K562 (cell line): ENCODE measurements at regions of chr5 and their contacts with region 1.

Region 1: DNA sequence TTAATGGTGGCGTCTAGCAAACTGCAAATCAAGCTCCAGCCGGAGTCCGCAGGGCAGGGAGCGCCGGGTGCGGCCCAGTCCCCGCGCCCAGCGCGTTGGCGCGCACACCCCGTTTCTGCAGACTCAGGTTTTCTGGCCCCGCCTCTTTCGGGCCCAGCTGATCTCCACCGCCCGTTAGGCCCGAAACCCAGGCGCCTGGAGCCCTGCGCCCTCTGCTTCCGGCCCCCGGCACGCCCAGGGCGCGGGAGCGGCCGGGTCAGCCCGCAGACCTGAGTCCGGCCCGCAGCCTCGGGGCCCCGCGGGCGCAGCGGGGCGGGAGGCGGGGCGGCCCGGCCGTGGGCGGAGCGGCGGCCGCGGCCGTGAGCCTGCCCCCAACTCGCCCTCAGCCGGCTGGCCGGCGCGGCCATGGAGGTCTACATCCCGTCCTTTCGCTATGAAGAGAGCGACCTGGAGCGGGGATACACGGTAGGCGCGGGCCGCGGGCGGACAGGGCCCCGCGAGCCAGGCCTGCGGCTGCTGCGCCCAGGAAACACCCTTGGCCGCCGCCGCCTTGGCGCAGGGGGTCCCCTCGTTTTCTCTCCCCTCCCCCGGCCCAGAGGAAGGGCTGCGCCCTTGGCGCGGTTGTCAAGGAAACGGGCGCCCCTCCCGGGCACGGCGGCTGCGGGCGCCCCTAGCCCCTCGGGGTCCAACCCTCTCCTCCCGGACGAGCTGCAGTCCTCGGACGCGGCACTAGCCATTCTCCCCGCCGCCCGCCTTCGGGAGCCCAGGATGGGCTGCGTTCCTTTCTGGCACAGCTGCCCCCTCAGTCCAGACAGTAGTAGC is at the start of gene SNX24:
- DNase-seq: peak; percentile 89 to 92 (median 91)
- ATAC-seq: peak; percentile 91
- H3K4me3 ChIP-seq: peak within 1 kb of the TSS; percentile 61
- H3K27ac ChIP-seq: peak within 1 kb of the TSS; percentile 68
- H3K4me1 ChIP-seq: peaks cover 11 to 21% of the 10 kb centered on the region in 2 experiments; a peak in 4 of 5 replicates
- H3K27me3 ChIP-seq: no peaks in the 10 kb centered on the region
- CTCF ChIP-seq: no peak; a peak in 1 of 6 replicates
- EP300 ChIP-seq: peak; percentile 18; the same call in 1 of the 2 replicates
- POLR2A ChIP-seq: peak; percentile 73
- RAD21 ChIP-seq: no peak; a peak in 1 of 4 replicates
- polyA plus RNA-seq, gene SNX24: 7.9 to 8.6 TPM

Region 2: GRCh38 chr5:122882837-122883236 is 37.4 kb after region 1 on chr5:
- CTCF ChIA-PET with region 1: no interaction called
- POLR2A ChIA-PET with region 1: interaction called, 3 read pairs
- in situ Hi-C with region 1: no loop called
- intact Hi-C with region 1: loop called (anchors 2 kb)
- DNase-seq: no peak
- ATAC-seq: no peak
- H3K4me3 ChIP-seq: no peak overlapping the region
- H3K27ac ChIP-seq: no peak overlapping the region
- H3K4me1 ChIP-seq: no peaks in the 10 kb centered on the region
- H3K27me3 ChIP-seq: no peaks in the 10 kb centered on the region
- CTCF ChIP-seq: no peak
- EP300 ChIP-seq: no peak
- POLR2A ChIP-seq: no peak
- RAD21 ChIP-seq: no peak